ENCODE measurements at regions of chr12 and their contacts with region 1.

Region 1: GRCh38 chr12:69879041-69879960 is 54.3 kb downstream of the MYRFL start:
- DNase-seq: peak; percentile 62 to 81
- ATAC-seq: peak; percentile 94 to 99 (median 96)
- H3K4me3 ChIP-seq: no peak overlapping the region
- H3K4me3 Mint-ChIP-seq: no peak overlapping the region
- H3K27ac ChIP-seq: no peak overlapping the region
- H3K27ac Mint-ChIP-seq: no peak overlapping the region
- H3K4me1 ChIP-seq: peaks cover 4% of the 10 kb centered on the region
- H3K4me1 Mint-ChIP-seq: peaks cover 7 to 8% of the 10 kb centered on the region in 2 donors
- H3K27me3 ChIP-seq: no peaks in the 10 kb centered on the region
- H3K27me3 Mint-ChIP-seq: peaks cover 24 to 35% of the 10 kb centered on the region in 2 donors
- CTCF ChIP-seq: peak; percentile 93

Region 2: GRCh38 chr12:69985656-69986055 is 106.4 kb after region 1 on chr12:
- intact Hi-C with region 1: no loop called
- DNase-seq: peak in 1 of 2 donors; percentile 3
- ATAC-seq: peak in 2 of 3 donors; percentile 63 to 75
- H3K4me3 ChIP-seq: no peak overlapping the region
- H3K4me3 Mint-ChIP-seq: no peak overlapping the region
- H3K27ac ChIP-seq: no peak overlapping the region
- H3K27ac Mint-ChIP-seq: no peak overlapping the region
- H3K4me1 ChIP-seq: no peaks in the 10 kb centered on the region
- H3K4me1 Mint-ChIP-seq: no peaks in the 10 kb centered on the region
- H3K27me3 ChIP-seq: peaks cover 4% of the 10 kb centered on the region
- H3K27me3 Mint-ChIP-seq: peaks cover 2 to 11% of the 10 kb centered on the region in 2 donors
- CTCF ChIP-seq: peak; percentile 24

Region 3: GRCh38 chr12:70576346-70577282 is 697.3 kb after region 1 on chr12:
- intact Hi-C with region 1: loop called (anchors 1 kb)
- DNase-seq: peak in 1 of 2 donors; percentile 66
- ATAC-seq: peak in 1 of 3 donors; percentile 52
- H3K4me3 ChIP-seq: no peak overlapping the region
- H3K4me3 Mint-ChIP-seq: no peak overlapping the region
- H3K27ac ChIP-seq: no peak overlapping the region
- H3K27ac Mint-ChIP-seq: no peak overlapping the region
- H3K4me1 ChIP-seq: no peaks in the 10 kb centered on the region
- H3K4me1 Mint-ChIP-seq: no peaks in the 10 kb centered on the region
- H3K27me3 ChIP-seq: no peaks in the 10 kb centered on the region
- H3K27me3 Mint-ChIP-seq: no peaks in the 10 kb centered on the region
- CTCF ChIP-seq: peak; percentile 63

Region 4: GRCh38 chr12:70719672-70720420 is 840.5 kb after region 1 on chr12:
- intact Hi-C with region 1: loop called (anchors 5 kb)
- DNase-seq: peak; percentile 37 to 42
- ATAC-seq: peak; percentile 68 to 87 (median 83)
- H3K4me3 ChIP-seq: peak overlapping the region; percentile 12
- H3K4me3 Mint-ChIP-seq: peak overlapping the region; percentile 82
- H3K27ac ChIP-seq: no peak overlapping the region
- H3K27ac Mint-ChIP-seq: peak overlapping the region; percentile 36 to 89
- H3K4me1 ChIP-seq: peaks cover 5% of the 10 kb centered on the region
- H3K4me1 Mint-ChIP-seq: peaks cover 17 to 26% of the 10 kb centered on the region in 2 donors
- H3K27me3 ChIP-seq: peaks cover 2% of the 10 kb centered on the region
- H3K27me3 Mint-ChIP-seq: peaks cover 8 to 21% of the 10 kb centered on the region in 2 donors
- CTCF ChIP-seq: peak; percentile 94

Region 5: GRCh38 chr12:70733385-70733784 is 854.1 kb after region 1 on chr12:
- intact Hi-C with region 1: loop called (anchors 1 kb)
- DNase-seq: peak in 1 of 2 donors; percentile 49
- ATAC-seq: peak in 2 of 3 donors; percentile 78 to 79
- H3K4me3 ChIP-seq: no peak overlapping the region
- H3K4me3 Mint-ChIP-seq: no peak overlapping the region
- H3K27ac ChIP-seq: no peak overlapping the region
- H3K27ac Mint-ChIP-seq: no peak overlapping the region
- H3K4me1 ChIP-seq: no peaks in the 10 kb centered on the region
- H3K4me1 Mint-ChIP-seq: no peaks in the 10 kb centered on the region
- H3K27me3 ChIP-seq: no peaks in the 10 kb centered on the region
- H3K27me3 Mint-ChIP-seq: peaks cover 5 to 12% of the 10 kb centered on the region in 2 donors
- CTCF ChIP-seq: peak; percentile 55

Measured in natural killer cell (primary cell).